ENCODE measurements at regions of chr7 and their contacts with region 1.

Region 1: DNA sequence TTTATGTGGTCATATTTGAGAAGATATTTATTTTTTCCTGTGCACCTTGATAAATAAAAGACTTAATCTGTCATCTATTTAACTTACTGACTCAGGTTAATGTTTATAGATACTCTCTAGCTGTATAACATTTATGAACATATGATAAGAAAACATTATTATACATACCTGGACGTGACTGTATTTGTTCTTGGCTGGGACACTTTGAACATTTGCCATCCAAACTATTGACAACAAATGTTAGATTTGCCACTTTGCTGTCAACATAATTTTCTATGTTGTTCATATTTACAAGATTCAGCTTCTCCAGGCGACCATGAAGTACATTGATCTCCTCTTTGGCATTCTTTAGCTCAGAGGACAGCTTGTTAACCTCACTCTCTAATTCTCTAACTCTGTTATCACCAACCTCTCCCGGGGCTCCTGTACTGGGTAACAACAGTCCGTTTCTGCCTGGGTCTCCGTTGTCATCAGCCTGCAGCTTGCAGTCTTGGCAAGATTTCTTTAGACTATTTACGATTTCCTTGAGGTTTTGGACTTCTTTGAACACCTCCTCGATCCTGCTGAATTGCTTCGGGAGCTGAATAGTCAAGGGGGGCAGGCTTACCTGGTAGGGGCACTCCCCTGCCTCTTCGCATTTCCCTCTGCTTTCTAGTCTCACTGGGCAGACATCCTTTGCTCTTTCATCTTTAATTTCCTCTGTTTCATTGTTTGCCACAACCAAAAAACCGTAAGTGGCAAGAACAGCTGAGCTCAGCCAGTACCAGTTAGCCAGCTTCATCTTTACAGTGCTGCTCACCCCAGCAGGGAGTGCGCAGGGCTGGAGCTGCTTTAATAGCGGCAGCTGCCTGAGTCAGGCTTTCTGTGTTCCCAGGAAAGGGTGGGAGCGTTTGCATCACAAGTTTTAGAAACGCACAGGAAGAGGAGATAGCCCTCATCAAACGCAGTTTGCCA is at the start of gene FGL2:
- H3K4me3 Mint-ChIP-seq: peak within 1 kb of the TSS; percentile 90
- H3K27ac Mint-ChIP-seq: peak within 1 kb of the TSS; percentile 98
- H3K4me1 Mint-ChIP-seq: peaks cover 23% of the 10 kb centered on the region
- H3K27me3 Mint-ChIP-seq: no peaks in the 10 kb centered on the region

Region 2: DNA sequence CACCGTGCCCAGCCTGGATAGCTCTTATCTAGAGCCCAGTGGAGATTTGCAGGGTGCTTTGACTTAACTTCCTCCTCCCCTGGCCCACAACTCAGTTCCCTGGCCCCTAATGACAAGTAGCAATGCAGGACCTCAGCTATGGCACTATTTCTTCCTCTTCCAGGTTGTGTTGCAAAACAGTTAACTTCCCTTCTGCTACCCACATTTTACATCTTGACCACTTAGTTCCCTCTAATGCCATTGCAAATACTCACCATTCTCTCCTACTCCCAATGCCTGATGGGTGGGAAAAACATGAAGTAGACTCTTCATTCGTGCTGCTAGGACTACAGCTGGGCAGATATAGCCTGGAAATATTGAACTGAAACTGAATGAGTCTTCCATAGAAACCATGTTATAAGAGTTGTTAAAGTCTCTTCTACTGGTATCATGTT is 39.4 kb after region 1 on chr7:
- intact Hi-C with region 1: loop called (anchors 2 kb)
- H3K4me3 Mint-ChIP-seq: peak overlapping the region; percentile 67
- H3K27ac Mint-ChIP-seq: peak overlapping the region; percentile 92
- H3K4me1 Mint-ChIP-seq: peaks cover 69% of the 10 kb centered on the region
- H3K27me3 Mint-ChIP-seq: no peaks in the 10 kb centered on the region

Region 3: GRCh38 chr7:77247206-77247850 is 48.0 kb after region 1 on chr7:
- intact Hi-C with region 1: loop called (anchors 2 kb)
- H3K4me3 Mint-ChIP-seq: no peak overlapping the region
- H3K27ac Mint-ChIP-seq: no peak overlapping the region
- H3K4me1 Mint-ChIP-seq: peaks cover 44% of the 10 kb centered on the region
- H3K27me3 Mint-ChIP-seq: no peaks in the 10 kb centered on the region

Region 4: DNA sequence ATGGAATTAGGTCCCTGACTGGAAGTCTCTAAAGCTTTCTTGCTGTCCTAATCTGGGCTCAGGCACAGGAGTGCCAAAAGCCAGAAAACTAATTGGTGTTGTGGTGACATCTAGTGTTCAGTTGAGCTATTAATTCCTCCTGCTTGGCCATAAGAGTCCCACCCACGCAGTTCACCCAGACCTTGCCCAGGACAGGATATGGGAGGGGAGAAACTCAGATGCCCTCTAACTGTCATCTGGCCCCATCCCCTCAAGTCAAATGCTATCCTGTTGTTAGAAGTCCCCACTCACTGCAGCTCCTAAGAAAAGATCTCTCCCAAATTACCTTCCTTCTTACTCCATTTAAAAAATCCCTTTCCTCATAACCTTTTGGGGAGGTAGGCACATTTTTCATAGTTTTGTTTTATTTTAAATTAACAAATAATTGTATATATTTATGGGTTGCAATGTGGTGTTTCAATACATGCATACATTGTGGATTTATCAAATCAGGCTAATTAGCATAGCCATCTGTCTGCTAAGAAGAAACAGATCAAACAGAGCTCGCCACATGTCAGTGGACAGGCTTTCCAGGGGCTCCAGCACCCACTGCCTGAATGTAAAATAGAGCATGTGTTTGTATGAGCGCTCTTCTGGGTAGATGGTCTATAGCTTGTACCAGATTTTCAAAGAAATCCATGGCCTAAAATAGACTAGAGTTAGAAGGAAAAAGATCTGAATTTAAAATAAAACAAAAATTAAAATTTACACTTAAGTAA is 132.8 kb after region 1 on chr7:
- intact Hi-C with region 1: loop called (anchors 10 kb)
- H3K4me3 Mint-ChIP-seq: no peak overlapping the region
- H3K27ac Mint-ChIP-seq: no peak overlapping the region
- H3K4me1 Mint-ChIP-seq: peaks cover 54% of the 10 kb centered on the region
- H3K27me3 Mint-ChIP-seq: no peaks in the 10 kb centered on the region

Region 5: DNA sequence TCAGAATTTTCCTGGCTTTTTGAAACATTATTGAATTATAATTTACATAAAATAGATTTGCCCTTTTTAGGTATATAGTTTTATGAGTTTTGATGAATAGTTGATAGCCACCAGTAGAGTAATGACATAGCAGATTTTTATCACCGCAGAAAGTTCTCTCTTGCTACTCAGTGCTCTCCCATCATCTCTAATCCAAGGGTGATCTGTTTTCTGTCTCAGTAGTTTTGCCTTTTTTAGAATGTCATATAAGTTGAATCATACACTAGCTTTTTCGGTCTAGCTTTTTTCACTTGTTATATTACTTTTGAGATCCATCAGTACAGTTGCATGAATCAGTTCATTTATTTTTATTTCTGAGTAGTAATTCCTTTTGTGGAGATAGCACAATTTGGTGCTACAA is 514.9 kb after region 1 on chr7:
- intact Hi-C with region 1: no loop called
- H3K4me3 Mint-ChIP-seq: no peak overlapping the region
- H3K27ac Mint-ChIP-seq: no peak overlapping the region
- H3K4me1 Mint-ChIP-seq: peaks cover 22% of the 10 kb centered on the region
- H3K27me3 Mint-ChIP-seq: no peaks in the 10 kb centered on the region

Measured in dendritic cell treated with granulocyte-macrophage colony-stimulating factor and Interleukin-4, amounts not matched to agents 40 ng/mL and 50 ng/mL, for 4 days (primary cell).